PC-9 (cell line): ENCODE measurements at regions of chr6 and their contacts with region 1.

Region 1: GRCh38 chr6:9316831-9317230 is 881.5 kb upstream of the SLC35B3 start:
- DNase-seq: no peak
- H3K4me3 ChIP-seq: no peak overlapping the region
- H3K27ac ChIP-seq: no peak overlapping the region
- H3K4me1 ChIP-seq: no peaks in the 10 kb centered on the region
- H3K27me3 ChIP-seq: no peaks in the 10 kb centered on the region
- CTCF ChIP-seq: no peak

Region 2: GRCh38 chr6:9398071-9398766 is 81.4 kb after region 1 on chr6:
- CTCF ChIA-PET with region 1: no interaction called
- POLR2A ChIA-PET with region 1: no interaction called
- intact Hi-C with region 1: loop called (anchors 2 kb)
- DNase-seq: peak in 1 of 2 experiments; percentile 32
- H3K4me3 ChIP-seq: no peak overlapping the region
- H3K27ac ChIP-seq: no peak overlapping the region
- H3K4me1 ChIP-seq: no peaks in the 10 kb centered on the region
- H3K27me3 ChIP-seq: no peaks in the 10 kb centered on the region
- CTCF ChIP-seq: no peak